ENCODE measurements at regions of chr3 and their contacts with region 1.

Region 1: GRCh38 chr3:155701882-155702465 is 42.9 kb downstream of the PLCH1 start:
- DNase-seq: no peak
- ATAC-seq: peak; percentile 45
- H3K4me3 Mint-ChIP-seq: no peak overlapping the region
- H3K27ac Mint-ChIP-seq: no peak overlapping the region
- H3K4me1 Mint-ChIP-seq: no peaks in the 10 kb centered on the region
- H3K27me3 Mint-ChIP-seq: peaks cover 7% of the 10 kb centered on the region

Region 2: GRCh38 chr3:155352900-155353490 is 349.0 kb before region 1 on chr3:
- CTCF ChIA-PET with region 1: interaction called, 28 read pairs
- DNase-seq: no peak
- ATAC-seq: no peak
- H3K4me3 Mint-ChIP-seq: no peak overlapping the region
- H3K27ac Mint-ChIP-seq: no peak overlapping the region
- H3K4me1 Mint-ChIP-seq: no peaks in the 10 kb centered on the region
- H3K27me3 Mint-ChIP-seq: peaks cover 5% of the 10 kb centered on the region

Region 3: DNA sequence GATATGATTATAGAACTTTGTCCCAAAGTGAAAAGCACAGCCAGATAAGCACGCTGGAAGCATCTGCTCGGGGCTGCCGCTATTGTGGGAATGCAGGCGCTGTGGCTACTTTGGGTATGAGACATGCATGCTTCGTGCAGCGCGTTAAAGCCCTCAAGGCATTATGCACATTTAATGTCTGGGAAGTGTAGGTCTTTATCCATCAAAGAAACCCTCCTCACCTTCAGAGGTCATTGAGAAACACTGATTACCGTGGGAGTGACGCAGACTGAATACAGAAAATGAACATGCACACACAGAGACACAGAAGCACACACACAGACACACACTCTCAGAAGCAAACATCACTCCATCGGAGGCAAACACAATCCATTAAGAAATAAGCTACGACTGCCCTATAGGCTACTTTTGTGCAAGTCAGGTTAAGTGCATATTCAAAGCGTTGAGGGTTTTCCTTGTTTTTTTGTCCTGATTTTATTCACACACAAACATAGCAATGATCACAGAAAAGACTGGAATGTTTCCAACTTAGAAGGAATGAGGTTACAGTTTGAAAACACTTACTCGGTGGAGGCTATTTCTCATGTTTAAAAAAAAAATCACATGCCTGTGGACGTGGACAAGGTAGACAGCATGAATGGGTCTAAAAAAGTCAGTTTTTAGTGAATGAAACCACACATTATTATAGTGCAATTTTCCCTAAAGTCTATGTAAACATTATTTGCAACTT is 25.6 kb before region 1 on chr3:
- CTCF ChIA-PET with region 1: no interaction called
- DNase-seq: no peak
- ATAC-seq: no peak
- H3K4me3 Mint-ChIP-seq: no peak overlapping the region
- H3K27ac Mint-ChIP-seq: no peak overlapping the region
- H3K4me1 Mint-ChIP-seq: no peaks in the 10 kb centered on the region
- H3K27me3 Mint-ChIP-seq: peaks cover 21% of the 10 kb centered on the region

Region 4: GRCh38 chr3:155712008-155712407 is 10.0 kb after region 1 on chr3:
- CTCF ChIA-PET with region 1: interaction called, 19 read pairs
- DNase-seq: no peak
- ATAC-seq: no peak
- H3K4me3 Mint-ChIP-seq: no peak overlapping the region
- H3K27ac Mint-ChIP-seq: no peak overlapping the region
- H3K4me1 Mint-ChIP-seq: no peaks in the 10 kb centered on the region
- H3K27me3 Mint-ChIP-seq: no peaks in the 10 kb centered on the region

Region 5: DNA sequence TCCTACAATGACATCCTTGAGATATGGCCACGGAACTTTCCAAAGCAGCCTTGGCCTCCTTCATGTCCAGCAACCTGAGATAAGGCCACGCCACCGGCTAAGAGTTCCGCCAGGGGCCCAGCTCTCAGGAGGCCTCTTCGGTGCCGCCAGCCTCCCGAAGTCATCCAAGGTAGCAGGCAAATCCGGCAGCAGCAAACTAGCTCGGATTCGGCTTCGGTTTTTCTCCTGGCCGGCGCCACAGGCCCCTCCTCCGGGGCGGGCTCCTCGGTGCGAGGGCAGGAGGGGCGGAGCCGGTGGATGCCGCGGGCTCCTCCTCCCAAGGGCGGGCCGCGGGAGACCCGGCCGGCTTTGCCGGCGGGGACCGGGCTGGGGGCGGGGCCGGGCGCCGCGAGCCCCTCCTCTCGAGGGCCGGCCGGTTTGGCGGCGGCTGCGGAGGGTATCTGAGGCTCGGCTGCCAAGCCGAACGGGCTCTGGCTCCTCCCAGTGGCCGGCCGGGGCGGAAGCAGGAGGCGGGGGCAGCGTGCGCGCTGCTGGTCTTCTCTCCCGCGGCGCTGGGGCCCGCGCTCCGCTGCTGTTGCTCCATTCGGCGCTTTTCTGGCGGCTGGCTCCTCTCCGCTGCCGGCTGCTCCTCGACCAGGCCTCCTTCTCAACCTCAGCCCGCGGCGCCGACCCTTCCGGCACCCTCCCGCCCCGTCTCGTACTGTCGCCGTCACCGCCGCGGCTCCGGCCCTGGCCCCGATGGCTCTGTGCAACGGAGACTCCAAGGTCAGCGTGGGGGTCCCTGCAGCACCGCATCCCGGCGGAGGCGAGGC is 168.4 kb after region 1 on chr3 and contains the start of gene GMPS:
- CTCF ChIA-PET with region 1: no interaction called
- DNase-seq: peak; percentile 96
- ATAC-seq: peak; percentile 91
- H3K4me3 Mint-ChIP-seq: peak within 1 kb of the TSS; percentile 93
- H3K27ac Mint-ChIP-seq: peak within 1 kb of the TSS; percentile 94
- H3K4me1 Mint-ChIP-seq: peaks cover 30% of the 10 kb centered on the region
- H3K27me3 Mint-ChIP-seq: no peaks in the 10 kb centered on the region
- total RNA-seq, gene GMPS: 96.9 to 104 TPM

Measured in activated CD8-positive, alpha-beta memory T cell treated with anti-CD3 and anti-CD28 coated beads, Interleukin-2, amount 10 ng/mL, durations not matched to agents 7 days and 5 days (primary cell).